ENCODE measurements at regions of chr20 and their contacts with region 1.

Region 1: GRCh38 chr20:32945710-32946221 is 58.5 kb downstream of the SUN5 start:
- DNase-seq: no peak
- ATAC-seq: peak; percentile 96
- H3K4me3 Mint-ChIP-seq: peak overlapping the region; percentile 48
- H3K27ac Mint-ChIP-seq: peak overlapping the region; percentile 83
- H3K4me1 Mint-ChIP-seq: peaks cover 21% of the 10 kb centered on the region
- H3K27me3 Mint-ChIP-seq: peaks cover 3% of the 10 kb centered on the region

Region 2: DNA sequence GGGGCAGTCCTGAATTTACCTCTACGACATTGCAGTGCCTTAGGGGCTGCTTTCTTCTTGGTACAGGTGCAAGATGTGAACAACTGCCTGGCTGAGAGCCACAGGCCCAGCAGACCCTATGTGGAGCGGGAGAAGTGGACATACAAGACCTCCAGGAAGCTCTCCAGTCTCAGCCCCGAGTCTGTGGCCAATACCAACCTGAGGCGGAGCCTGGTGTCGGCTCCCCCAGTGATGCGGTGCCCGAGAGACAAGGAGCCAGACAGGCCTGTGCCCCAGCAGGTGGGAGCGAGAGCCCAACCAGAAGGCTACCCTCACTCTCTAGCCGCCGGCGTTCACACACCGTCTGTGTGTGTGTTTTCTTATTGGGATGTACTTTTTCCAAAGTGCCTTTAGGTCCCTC is 27.5 kb before region 1 on chr20:
- POLR2A ChIA-PET with region 1: no interaction called
- DNase-seq: no peak
- ATAC-seq: no peak
- H3K4me3 Mint-ChIP-seq: no peak overlapping the region
- H3K27ac Mint-ChIP-seq: no peak overlapping the region
- H3K4me1 Mint-ChIP-seq: no peaks in the 10 kb centered on the region
- H3K27me3 Mint-ChIP-seq: no peaks in the 10 kb centered on the region

Region 3: GRCh38 chr20:32930181-32930580 is 15.6 kb before region 1 on chr20:
- POLR2A ChIA-PET with region 1: no interaction called
- DNase-seq: no peak
- ATAC-seq: no peak
- H3K4me3 Mint-ChIP-seq: no peak overlapping the region
- H3K27ac Mint-ChIP-seq: no peak overlapping the region
- H3K4me1 Mint-ChIP-seq: peaks cover 1% of the 10 kb centered on the region
- H3K27me3 Mint-ChIP-seq: peaks cover 5% of the 10 kb centered on the region

Region 4: DNA sequence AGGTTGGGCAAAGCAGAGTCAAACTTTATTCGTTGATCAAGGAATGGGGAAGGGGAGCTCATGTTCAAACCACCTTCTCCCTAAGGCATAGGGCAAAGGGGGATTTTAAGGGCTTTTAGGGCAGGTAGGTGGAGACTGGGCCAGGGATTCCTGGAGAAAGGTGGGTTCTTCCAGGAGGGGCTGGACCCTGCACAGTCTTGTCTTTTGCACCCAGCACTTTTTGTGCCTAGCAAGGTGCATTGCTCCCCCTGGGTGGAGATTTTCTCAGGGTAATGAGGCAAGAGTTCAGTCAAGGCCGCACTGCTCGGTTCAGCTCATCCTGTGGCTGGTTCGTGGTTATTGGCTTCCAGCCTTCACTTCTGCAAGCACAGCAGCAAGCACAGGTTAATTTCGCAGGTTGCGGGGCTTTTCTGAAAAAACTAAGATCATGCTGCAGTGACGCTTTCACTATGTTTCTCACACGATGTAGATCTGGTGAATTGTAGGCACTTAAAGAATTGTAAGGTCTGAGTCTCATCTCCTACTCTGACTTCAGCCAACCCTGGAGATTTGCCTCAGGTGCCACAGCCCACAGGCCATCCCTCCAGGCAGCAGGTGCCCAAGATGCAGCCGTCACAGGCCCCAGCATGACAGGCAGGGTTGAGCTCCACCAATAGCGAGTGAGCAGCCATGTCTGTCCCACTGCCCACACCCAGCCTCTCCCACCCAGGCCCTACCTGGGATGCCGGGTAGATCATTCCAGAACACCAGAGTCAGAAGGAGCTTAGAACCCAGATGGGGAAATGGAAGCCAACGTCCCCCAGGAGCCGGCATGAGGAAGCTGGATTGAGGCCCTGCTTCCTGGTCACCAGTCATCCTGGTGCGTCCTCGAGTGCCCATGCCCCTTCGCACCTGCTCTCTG is 21.4 kb after region 1 on chr20:
- POLR2A ChIA-PET with region 1: interaction called, 15 read pairs
- DNase-seq: peak; percentile 69
- ATAC-seq: peak; percentile 64
- H3K4me3 Mint-ChIP-seq: peak overlapping the region; percentile 78
- H3K27ac Mint-ChIP-seq: peak overlapping the region; percentile 93
- H3K4me1 Mint-ChIP-seq: peaks cover 63% of the 10 kb centered on the region
- H3K27me3 Mint-ChIP-seq: no peaks in the 10 kb centered on the region

Region 5: GRCh38 chr20:32972181-32973076 is 26.7 kb after region 1 on chr20:
- POLR2A ChIA-PET with region 1: interaction called, 15 read pairs
- DNase-seq: peak; percentile 68
- ATAC-seq: peak; percentile 84
- H3K4me3 Mint-ChIP-seq: peak overlapping the region; percentile 55
- H3K27ac Mint-ChIP-seq: no peak overlapping the region
- H3K4me1 Mint-ChIP-seq: peaks cover 51% of the 10 kb centered on the region
- H3K27me3 Mint-ChIP-seq: no peaks in the 10 kb centered on the region

Region 6: GRCh38 chr20:33037456-33037855 is 91.7 kb after region 1 on chr20:
- POLR2A ChIA-PET with region 1: no interaction called
- DNase-seq: no peak
- ATAC-seq: no peak
- H3K4me3 Mint-ChIP-seq: no peak overlapping the region
- H3K27ac Mint-ChIP-seq: no peak overlapping the region
- H3K4me1 Mint-ChIP-seq: no peaks in the 10 kb centered on the region
- H3K27me3 Mint-ChIP-seq: peaks cover 2% of the 10 kb centered on the region

Measured in activated naive CD8-positive, alpha-beta T cell treated with anti-CD3 and anti-CD28 coated beads, Interleukin-2, amount 10 ng/mL, durations not matched to agents 7 days and 5 days (primary cell).